ENCODE measurements at regions of chr5 and their contacts with region 1.

Region 1: GRCh38 chr5:73534971-73535370 is 30.5 kb downstream of the ANKRA2 start:
- DNase-seq: no peak
- H3K4me3 ChIP-seq: no peak overlapping the region
- H3K27ac ChIP-seq: no peak overlapping the region
- H3K4me1 ChIP-seq: peaks cover 0 to 7% of the 10 kb centered on the region in 2 experiments; a peak in 1 of 4 replicates
- H3K27me3 ChIP-seq: no peaks in the 10 kb centered on the region
- CTCF ChIP-seq: no peak
- EP300 ChIP-seq: no peak
- RAD21 ChIP-seq: no peak

Region 2: DNA sequence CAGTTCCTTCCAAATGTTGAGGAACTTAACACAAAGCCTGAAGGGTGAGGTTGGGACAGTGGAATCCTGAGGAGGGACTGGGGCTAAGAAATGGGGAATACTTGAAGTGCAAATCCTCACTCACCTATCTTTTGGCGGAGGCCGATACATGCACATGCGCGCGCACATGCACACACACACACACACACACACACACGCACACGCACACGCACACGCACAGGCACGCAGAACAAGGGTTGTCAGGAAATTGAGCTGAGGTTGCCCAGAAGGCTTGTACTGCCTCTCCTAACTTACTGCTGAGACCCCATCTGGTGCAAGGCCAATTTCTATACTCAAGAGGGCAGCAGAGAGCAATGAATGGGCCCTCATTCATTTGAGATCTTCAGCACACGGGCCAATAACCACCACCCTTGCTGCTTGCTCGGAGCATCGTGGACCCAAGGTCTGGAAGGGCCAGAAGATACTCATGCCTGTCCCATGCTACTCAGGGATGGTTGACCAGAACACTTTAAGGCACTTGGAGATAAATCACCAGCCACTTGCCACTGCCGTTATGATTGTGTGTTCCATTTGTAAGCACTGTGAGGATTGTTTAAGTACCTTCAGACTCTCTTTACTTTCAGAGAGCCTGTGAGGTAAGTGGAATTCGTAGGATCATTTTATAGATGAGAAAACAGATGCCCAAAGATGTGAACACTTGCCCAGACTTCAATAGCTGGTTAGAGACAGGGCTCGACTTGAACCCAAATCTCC is 15.3 kb before region 1 on chr5:
- CTCF ChIA-PET with region 1: interaction called, 100 read pairs
- POLR2A ChIA-PET with region 1: no interaction called
- DNase-seq: peak; percentile 84
- H3K4me3 ChIP-seq: no peak overlapping the region
- H3K27ac ChIP-seq: no peak overlapping the region
- H3K4me1 ChIP-seq: no peaks in the 10 kb centered on the region; a peak in 1 of 4 replicates
- H3K27me3 ChIP-seq: no peaks in the 10 kb centered on the region
- CTCF ChIP-seq: peak; percentile 81
- EP300 ChIP-seq: no peak
- RAD21 ChIP-seq: peak; percentile 87

Measured in SK-N-SH (cell line).